ENCODE measurements at regions of chr7 and their contacts with region 1.

Region 1: GRCh38 chr7:54546081-54546985 is 4.2 kb downstream of the VSTM2A start:
- DNase-seq: no peak
- ATAC-seq: peak; percentile 88
- H3K4me3 ChIP-seq: peak overlapping the region; percentile 29 to 36
- H3K27ac ChIP-seq: no peak overlapping the region
- H3K4me1 ChIP-seq: peaks cover 2% of the 10 kb centered on the region; the same call in 1 of the 2 replicates
- H3K27me3 ChIP-seq: peaks cover 39% of the 10 kb centered on the region
- CTCF ChIP-seq: peak; percentile 68

Region 2: GRCh38 chr7:54664235-54665228 is 118.2 kb after region 1 on chr7:
- CTCF ChIA-PET with region 1: no interaction called
- POLR2A ChIA-PET with region 1: no interaction called
- in situ Hi-C with region 1: no loop called
- intact Hi-C with region 1: loop called (anchors 5 kb)
- DNase-seq: no peak
- ATAC-seq: peak; percentile 99
- H3K4me3 ChIP-seq: peak overlapping the region; percentile 44 to 51
- H3K27ac ChIP-seq: no peak overlapping the region
- H3K4me1 ChIP-seq: 0 out of 2 replicates have a peak, but pooled peaks cover 3% of the 10 kb centered on the region
- H3K27me3 ChIP-seq: peaks cover 27% of the 10 kb centered on the region
- CTCF ChIP-seq: peak; percentile 91

Region 3: GRCh38 chr7:55493408-55493807 is 947.1 kb after region 1 on chr7:
- CTCF ChIA-PET with region 1: no interaction called
- POLR2A ChIA-PET with region 1: no interaction called
- in situ Hi-C with region 1: no loop called
- intact Hi-C with region 1: no loop called
- DNase-seq: peak; percentile 30
- ATAC-seq: no peak
- H3K4me3 ChIP-seq: no peak overlapping the region
- H3K27ac ChIP-seq: no peak overlapping the region
- H3K4me1 ChIP-seq: no peaks in the 10 kb centered on the region
- H3K27me3 ChIP-seq: no peaks in the 10 kb centered on the region
- CTCF ChIP-seq: no peak

Measured in Panc1 (cell line).